ENCODE measurements at regions of chr5 and their contacts with region 1.

Region 1: GRCh38 chr5:67844924-67845323 is 370.6 kb upstream of the PIK3R1 start:
- DNase-seq: no peak
- H3K4me3 ChIP-seq: no peak overlapping the region
- H3K27ac ChIP-seq: no peak overlapping the region
- H3K4me1 ChIP-seq: no peaks in the 10 kb centered on the region
- H3K27me3 ChIP-seq: no peaks in the 10 kb centered on the region
- CTCF ChIP-seq: no peak
- EP300 ChIP-seq: no peak
- POLR2A ChIP-seq: no peak

Region 2: DNA sequence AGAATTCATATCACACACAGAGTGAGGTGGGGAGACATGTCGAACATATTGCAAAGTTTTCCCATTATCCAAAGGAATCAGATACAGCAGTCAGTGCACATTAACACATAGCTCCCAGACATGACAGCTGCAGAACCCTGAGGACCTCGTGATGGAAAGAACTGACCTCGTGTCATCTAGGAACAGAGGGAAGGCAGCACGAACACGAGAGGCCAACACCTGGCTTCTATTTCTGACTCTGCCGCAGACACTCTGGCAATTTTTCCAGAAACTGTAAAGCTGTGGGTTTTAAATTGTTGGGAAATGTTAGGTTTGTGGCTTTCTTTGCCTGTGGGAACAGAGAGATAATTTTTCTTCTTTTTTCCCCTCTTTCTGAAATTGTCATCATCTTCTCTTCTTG is 55.6 kb after region 1 on chr5:
- in situ Hi-C with region 1: no loop called
- intact Hi-C with region 1: no loop called
- DNase-seq: no peak
- H3K4me3 ChIP-seq: no peak overlapping the region
- H3K27ac ChIP-seq: no peak overlapping the region
- H3K4me1 ChIP-seq: peaks cover 0 to 4% (median 0%) of the 10 kb centered on the region in 4 donors
- H3K27me3 ChIP-seq: no peaks in the 10 kb centered on the region
- CTCF ChIP-seq: no peak
- EP300 ChIP-seq: no peak
- POLR2A ChIP-seq: no peak

Region 3: DNA sequence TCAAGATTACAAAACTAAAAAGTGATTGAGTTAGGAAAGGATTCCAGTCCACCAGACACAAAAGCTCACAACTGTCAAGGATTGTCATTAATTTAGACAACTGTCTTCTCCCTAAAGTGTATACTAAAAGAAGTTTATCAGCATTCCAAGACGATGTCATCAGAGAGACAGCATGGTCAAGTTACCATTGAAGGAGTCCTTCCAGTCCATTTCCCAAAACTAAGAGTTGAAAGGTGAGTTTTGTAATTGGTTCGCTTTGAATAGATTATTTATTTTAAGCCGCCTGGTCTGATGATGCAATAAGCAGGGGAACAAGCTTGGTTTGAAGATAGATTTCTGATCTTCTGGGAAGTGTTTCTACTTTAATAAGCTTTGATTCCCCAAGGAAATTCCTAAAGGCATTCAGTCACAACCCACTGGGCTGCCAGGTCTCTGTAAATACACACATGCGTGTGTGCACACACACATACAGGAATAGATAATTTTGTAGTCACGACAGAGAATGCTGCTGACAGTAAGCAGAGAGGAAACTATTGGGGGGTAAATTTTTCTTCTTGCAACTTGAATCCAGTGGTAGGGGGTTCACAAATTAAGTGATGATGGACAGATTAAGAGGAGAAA is 605.4 kb after region 1 on chr5:
- in situ Hi-C with region 1: no loop called
- intact Hi-C with region 1: loop called (anchors 5 kb)
- DNase-seq: no peak
- H3K4me3 ChIP-seq: no peak overlapping the region
- H3K27ac ChIP-seq: no peak overlapping the region
- H3K4me1 ChIP-seq: no peaks in the 10 kb centered on the region
- H3K27me3 ChIP-seq: no peaks in the 10 kb centered on the region
- CTCF ChIP-seq: no peak
- EP300 ChIP-seq: no peak
- POLR2A ChIP-seq: no peak